Dendritic cell treated with granulocyte-macrophage colony-stimulating factor and Interleukin-4, amounts not matched to agents 40 ng/mL and 50 ng/mL, for 4 days (primary cell): ENCODE measurements at regions of chr19 and their contacts with region 1.

Region 1: DNA sequence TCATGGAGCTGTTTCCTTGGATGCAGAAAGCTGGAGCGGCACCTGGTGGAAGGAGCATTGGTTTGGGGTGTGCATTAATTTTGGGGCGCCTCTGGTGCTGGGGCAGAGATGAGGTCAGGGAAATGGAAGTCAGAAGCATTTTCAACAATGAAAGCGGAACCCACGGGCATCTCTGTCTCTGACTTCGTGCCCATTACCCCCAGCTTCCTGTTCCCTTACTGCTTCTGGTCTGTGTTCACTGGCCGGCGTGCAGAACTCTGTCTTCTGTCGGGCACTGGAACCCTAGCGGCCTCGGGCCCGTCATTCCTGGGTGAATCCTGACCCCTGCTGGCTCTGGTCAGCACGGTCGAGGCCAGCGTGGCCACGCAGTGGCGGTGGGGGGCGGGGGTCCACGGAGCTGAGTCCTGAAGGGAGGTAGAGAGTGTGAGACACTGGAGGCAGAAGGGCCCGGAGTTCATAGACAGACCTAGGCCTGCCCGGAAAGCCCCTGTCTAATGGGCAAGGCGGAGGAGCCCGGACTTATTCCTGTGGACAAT is 7.9 kb upstream of the LINGO3 start:
- H3K4me3 Mint-ChIP-seq: peak overlapping the region; percentile 55
- H3K27ac Mint-ChIP-seq: peak overlapping the region; percentile 59
- H3K4me1 Mint-ChIP-seq: peaks cover 26% of the 10 kb centered on the region
- H3K27me3 Mint-ChIP-seq: peaks cover 23% of the 10 kb centered on the region

Region 2: GRCh38 chr19:2236314-2237050 is 79.4 kb before region 1 on chr19 and contains the starts of genes PLEKHJ1 and SF3A2:
- intact Hi-C with region 1: loop called (anchors 5 kb)
- H3K4me3 Mint-ChIP-seq: peak within 1 kb of the TSS; percentile 94
- H3K27ac Mint-ChIP-seq: peak within 1 kb of the TSS; percentile 98
- H3K4me1 Mint-ChIP-seq: peaks cover 78% of the 10 kb centered on the region
- H3K27me3 Mint-ChIP-seq: no peaks in the 10 kb centered on the region

Region 3: DNA sequence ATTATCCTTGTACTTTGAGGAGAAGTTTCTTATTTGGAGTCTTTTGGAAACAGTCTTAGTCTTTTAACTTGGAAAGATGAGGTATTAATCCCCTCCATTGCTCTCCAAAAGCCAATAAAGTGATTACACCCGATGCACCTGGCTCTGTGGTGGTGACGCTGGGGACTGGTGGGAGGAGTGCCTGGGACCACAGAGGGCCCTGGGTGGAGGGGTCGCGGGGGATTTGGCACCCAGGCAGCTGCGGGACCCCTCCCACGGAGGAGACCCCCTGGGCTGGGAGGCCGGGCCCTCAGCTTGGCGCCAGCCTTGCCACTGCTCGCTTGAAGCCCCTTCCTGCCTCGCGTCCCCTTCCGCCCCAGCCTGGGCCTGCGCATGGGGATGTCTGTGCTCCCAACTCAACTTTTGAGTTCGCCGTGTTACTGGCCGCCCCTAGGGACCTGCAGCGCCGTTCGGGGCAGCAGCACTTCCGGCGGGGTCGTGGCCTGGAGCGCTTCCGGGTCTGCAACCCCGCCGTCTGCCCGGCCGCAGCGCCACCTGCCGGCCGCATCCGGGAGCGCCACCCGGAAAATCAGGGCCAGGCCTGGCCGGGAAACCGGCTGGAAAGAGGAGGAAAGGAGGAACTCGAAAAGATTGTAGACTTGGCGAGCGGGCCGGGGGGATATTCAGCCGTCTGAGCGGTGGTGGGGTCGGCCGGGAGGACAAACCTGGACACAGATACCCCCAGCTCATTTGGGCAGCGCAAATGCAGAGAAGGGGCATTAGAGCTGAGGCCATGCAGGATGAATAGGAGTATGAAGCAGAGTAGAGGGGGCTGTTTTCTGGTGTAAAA is 42.3 kb before region 1 on chr19:
- intact Hi-C with region 1: loop called (anchors 2 kb)
- H3K4me3 Mint-ChIP-seq: peak overlapping the region; percentile 90
- H3K27ac Mint-ChIP-seq: peak overlapping the region; percentile 98
- H3K4me1 Mint-ChIP-seq: peaks cover 61% of the 10 kb centered on the region
- H3K27me3 Mint-ChIP-seq: no peaks in the 10 kb centered on the region

Region 4: DNA sequence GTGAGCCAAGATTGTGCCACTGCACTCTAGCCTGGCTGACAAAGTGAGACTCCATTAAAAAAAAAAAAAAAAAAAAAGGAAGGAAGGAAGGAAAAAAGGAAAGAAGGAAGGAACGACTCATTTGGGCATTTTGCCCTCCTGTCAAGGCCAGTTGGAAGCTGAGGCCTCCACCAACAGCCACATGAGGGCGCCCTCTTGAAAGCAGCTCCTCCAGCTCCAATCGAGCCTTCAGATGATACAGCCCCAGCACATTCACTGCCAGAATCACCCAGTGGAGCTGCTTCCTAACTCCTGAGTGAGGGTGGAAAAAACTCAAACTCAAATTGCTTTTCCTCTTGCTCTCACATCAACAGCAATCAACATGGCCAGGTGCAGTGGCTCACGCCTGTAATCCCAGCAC is 345.7 kb after region 1 on chr19:
- intact Hi-C with region 1: no loop called
- H3K4me3 Mint-ChIP-seq: no peak overlapping the region
- H3K27ac Mint-ChIP-seq: no peak overlapping the region
- H3K4me1 Mint-ChIP-seq: peaks cover 20% of the 10 kb centered on the region
- H3K27me3 Mint-ChIP-seq: no peaks in the 10 kb centered on the region